Activated CD4-positive, alpha-beta memory T cell treated with anti-CD3 and anti-CD28 coated beads for 36 hours (primary cell): ENCODE measurements at regions of chr11 and their contacts with region 1.

Region 1: DNA sequence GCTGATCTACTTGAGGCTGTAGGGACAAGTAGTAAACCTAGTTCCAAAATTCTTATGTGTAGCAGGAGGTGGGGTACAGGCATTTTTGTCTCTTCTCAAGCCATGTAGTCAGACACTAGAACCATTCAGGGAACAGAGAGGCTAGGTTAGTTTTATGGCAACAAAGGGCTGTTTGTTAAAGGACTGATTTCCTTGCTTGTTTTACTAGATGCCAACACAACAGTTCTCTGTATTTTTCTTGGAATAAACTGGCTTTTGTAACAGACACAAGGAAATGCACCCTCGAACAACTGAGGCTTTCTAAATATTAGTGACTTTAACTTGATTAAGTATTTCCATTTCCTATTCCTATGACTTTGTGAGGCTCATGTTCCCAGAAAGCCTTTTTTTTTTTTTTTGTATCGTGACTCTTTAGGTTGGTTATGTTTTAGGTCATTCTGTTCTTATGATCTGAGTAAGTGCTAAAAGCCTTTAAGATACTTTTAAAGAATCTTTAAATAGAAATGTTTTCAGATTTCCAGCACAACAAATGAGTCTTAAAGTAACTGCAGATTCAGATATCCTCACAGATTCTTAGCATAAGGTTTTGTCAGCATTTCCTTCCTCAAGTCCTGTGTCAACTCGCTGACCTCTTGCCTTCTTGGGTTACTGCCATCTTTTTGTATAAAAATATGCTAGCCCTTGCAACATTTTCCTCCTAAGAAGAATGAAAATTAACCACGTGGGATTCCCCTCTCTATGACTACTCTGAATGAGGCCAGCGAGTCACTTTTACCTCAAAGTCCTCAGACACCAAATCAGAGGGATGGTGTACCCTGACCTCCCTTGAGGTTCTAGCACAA is 92.5 kb downstream of the CCDC83 start:
- DNase-seq: peak; percentile 59
- H3K4me3 Mint-ChIP-seq: peak overlapping the region; percentile 30
- H3K27ac Mint-ChIP-seq: peak overlapping the region; percentile 78
- H3K4me1 Mint-ChIP-seq: peaks cover 46% of the 10 kb centered on the region
- H3K27me3 Mint-ChIP-seq: no peaks in the 10 kb centered on the region

Region 2: GRCh38 chr11:85627998-85628770 is 319.5 kb before region 1 on chr11 and contains the start of gene TMEM126B:
- CTCF ChIA-PET with region 1: no interaction called
- POLR2A ChIA-PET with region 1: no interaction called
- intact Hi-C with region 1: loop called (anchors 2 kb)
- DNase-seq: peak; percentile 98
- H3K4me3 Mint-ChIP-seq: peak within 1 kb of the TSS; percentile 100
- H3K27ac Mint-ChIP-seq: peak within 1 kb of the TSS; percentile 99
- H3K4me1 Mint-ChIP-seq: peaks cover 38% of the 10 kb centered on the region
- H3K27me3 Mint-ChIP-seq: no peaks in the 10 kb centered on the region
- total RNA-seq, gene TMEM126B: 59.8 to 64.5 TPM

Region 3: DNA sequence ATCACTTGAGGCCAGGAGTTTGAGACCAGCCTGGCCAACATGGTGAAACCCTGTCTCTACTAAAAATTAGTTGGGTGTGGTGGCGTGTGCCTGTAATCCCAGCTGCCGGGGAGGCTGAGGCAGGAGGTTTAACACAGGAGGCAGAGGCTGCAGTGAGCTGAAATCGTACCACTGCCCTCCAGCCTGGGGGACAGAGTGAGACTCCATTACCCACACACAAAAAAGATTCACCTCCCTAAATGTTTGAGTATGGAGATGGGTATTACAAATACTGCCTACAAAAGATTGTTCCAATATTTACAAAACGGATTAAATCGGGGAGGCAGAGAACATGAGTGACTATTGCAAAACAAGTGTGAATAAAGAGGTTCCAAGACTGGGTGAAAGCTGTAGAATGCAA is 22.9 kb after region 1 on chr11:
- CTCF ChIA-PET with region 1: no interaction called
- POLR2A ChIA-PET with region 1: no interaction called
- intact Hi-C with region 1: no loop called
- DNase-seq: no peak
- H3K4me3 Mint-ChIP-seq: no peak overlapping the region
- H3K27ac Mint-ChIP-seq: peak overlapping the region; percentile 33
- H3K4me1 Mint-ChIP-seq: peaks cover 12% of the 10 kb centered on the region
- H3K27me3 Mint-ChIP-seq: no peaks in the 10 kb centered on the region

Region 4: GRCh38 chr11:86003654-86004053 is 56.0 kb after region 1 on chr11:
- CTCF ChIA-PET with region 1: no interaction called
- POLR2A ChIA-PET with region 1: no interaction called
- intact Hi-C with region 1: no loop called
- DNase-seq: no peak
- H3K4me3 Mint-ChIP-seq: no peak overlapping the region
- H3K27ac Mint-ChIP-seq: no peak overlapping the region
- H3K4me1 Mint-ChIP-seq: peaks cover 25% of the 10 kb centered on the region
- H3K27me3 Mint-ChIP-seq: no peaks in the 10 kb centered on the region

Region 5: DNA sequence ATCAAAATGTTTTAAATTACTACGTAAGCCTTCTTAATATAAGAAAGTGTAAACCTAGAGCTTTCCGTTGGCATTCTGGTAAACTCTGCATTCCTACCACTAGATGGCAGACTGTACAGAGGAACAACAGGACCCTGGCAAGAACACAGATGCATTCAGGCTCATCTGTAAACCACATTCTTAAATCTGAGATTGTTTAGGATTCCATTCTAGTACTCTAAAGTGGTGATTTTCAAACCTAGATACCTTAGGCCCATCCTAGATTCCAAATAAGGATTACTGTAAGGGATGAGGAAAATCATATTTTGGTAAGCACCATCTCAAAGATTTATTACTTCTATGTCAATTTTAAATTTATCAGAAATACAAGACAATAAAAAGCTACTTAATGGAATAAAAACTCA is 94.3 kb after region 1 on chr11:
- CTCF ChIA-PET with region 1: no interaction called
- POLR2A ChIA-PET with region 1: no interaction called
- intact Hi-C with region 1: loop called (anchors 1 kb)
- DNase-seq: peak; percentile 48
- H3K4me3 Mint-ChIP-seq: no peak overlapping the region
- H3K27ac Mint-ChIP-seq: peak overlapping the region; percentile 58
- H3K4me1 Mint-ChIP-seq: peaks cover 71% of the 10 kb centered on the region
- H3K27me3 Mint-ChIP-seq: no peaks in the 10 kb centered on the region

Region 6: GRCh38 chr11:86138958-86139357 is 191.3 kb after region 1 on chr11:
- CTCF ChIA-PET with region 1: no interaction called
- POLR2A ChIA-PET with region 1: no interaction called
- intact Hi-C with region 1: loop called (anchors 1 kb)
- DNase-seq: peak; percentile 61
- H3K4me3 Mint-ChIP-seq: peak overlapping the region; percentile 20
- H3K27ac Mint-ChIP-seq: peak overlapping the region; percentile 70
- H3K4me1 Mint-ChIP-seq: peaks cover 45% of the 10 kb centered on the region
- H3K27me3 Mint-ChIP-seq: no peaks in the 10 kb centered on the region

Region 7: GRCh38 chr11:86218125-86219084 is 270.8 kb after region 1 on chr11:
- CTCF ChIA-PET with region 1: interaction called, 8 read pairs
- POLR2A ChIA-PET with region 1: interaction called, 4 read pairs
- intact Hi-C with region 1: loop called (anchors 1 kb)
- DNase-seq: peak; percentile 79
- H3K4me3 Mint-ChIP-seq: peak overlapping the region; percentile 56
- H3K27ac Mint-ChIP-seq: peak overlapping the region; percentile 92
- H3K4me1 Mint-ChIP-seq: peaks cover 76% of the 10 kb centered on the region
- H3K27me3 Mint-ChIP-seq: no peaks in the 10 kb centered on the region

Region 8: DNA sequence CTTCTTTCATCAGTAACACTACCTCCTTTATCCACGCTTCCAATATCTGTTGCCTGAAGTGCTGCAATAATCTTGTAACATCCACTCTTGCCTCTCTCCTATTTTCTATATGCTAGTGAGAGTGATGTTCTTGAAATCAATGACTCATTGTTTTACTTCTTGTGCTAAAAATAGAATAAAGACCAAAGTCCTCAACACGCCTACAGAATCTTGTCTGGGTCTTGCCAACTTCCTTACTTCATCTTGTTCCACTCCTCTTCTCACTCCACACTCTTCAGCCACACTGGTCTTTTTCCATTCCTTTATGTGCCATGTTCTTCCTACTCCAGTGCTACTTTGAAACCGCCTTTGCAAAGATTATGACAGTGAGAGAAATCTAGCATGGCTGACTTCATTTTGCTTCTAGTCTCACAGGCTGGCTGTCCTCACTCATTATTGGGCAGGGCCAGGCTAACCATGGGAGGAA is 563.5 kb after region 1 on chr11:
- CTCF ChIA-PET with region 1: no interaction called
- POLR2A ChIA-PET with region 1: no interaction called
- intact Hi-C with region 1: loop called (anchors 5 kb)
- DNase-seq: no peak
- H3K4me3 Mint-ChIP-seq: no peak overlapping the region
- H3K27ac Mint-ChIP-seq: no peak overlapping the region
- H3K4me1 Mint-ChIP-seq: no peaks in the 10 kb centered on the region
- H3K27me3 Mint-ChIP-seq: no peaks in the 10 kb centered on the region